OCI-LY7 (cell line): ENCODE measurements at regions of chr3 and their contacts with region 1.

Region 1: GRCh38 chr3:150763122-150763841 is at the start of gene SIAH2:
- DNase-seq: peak; percentile 92
- H3K4me3 ChIP-seq: peak within 1 kb of the TSS; percentile 78
- H3K27ac ChIP-seq: peak within 1 kb of the TSS; percentile 58
- H3K4me1 ChIP-seq: peaks cover 71% of the 10 kb centered on the region
- CTCF ChIP-seq: no peak
- total RNA-seq, gene SIAH2: 22.2 and 22.7 TPM in 2 replicates

Region 2: GRCh38 chr3:150546226-150547044 is 216.8 kb before region 1 on chr3 and contains the starts of genes EIF2A and SERP1:
- CTCF ChIA-PET with region 1: no interaction called
- POLR2A ChIA-PET with region 1: interaction called, 6 read pairs
- intact Hi-C with region 1: loop called (anchors 2 kb)
- DNase-seq: peak; percentile 99
- H3K4me3 ChIP-seq: peak within 1 kb of the TSS; percentile 98
- H3K27ac ChIP-seq: peak within 1 kb of the TSS; percentile 81
- H3K4me1 ChIP-seq: peaks cover 40% of the 10 kb centered on the region
- CTCF ChIP-seq: no peak
- total RNA-seq, gene EIF2A: 85.6 and 86.0 TPM in 2 replicates
- total RNA-seq, gene SERP1: 182 and 183 TPM in 2 replicates

Region 3: DNA sequence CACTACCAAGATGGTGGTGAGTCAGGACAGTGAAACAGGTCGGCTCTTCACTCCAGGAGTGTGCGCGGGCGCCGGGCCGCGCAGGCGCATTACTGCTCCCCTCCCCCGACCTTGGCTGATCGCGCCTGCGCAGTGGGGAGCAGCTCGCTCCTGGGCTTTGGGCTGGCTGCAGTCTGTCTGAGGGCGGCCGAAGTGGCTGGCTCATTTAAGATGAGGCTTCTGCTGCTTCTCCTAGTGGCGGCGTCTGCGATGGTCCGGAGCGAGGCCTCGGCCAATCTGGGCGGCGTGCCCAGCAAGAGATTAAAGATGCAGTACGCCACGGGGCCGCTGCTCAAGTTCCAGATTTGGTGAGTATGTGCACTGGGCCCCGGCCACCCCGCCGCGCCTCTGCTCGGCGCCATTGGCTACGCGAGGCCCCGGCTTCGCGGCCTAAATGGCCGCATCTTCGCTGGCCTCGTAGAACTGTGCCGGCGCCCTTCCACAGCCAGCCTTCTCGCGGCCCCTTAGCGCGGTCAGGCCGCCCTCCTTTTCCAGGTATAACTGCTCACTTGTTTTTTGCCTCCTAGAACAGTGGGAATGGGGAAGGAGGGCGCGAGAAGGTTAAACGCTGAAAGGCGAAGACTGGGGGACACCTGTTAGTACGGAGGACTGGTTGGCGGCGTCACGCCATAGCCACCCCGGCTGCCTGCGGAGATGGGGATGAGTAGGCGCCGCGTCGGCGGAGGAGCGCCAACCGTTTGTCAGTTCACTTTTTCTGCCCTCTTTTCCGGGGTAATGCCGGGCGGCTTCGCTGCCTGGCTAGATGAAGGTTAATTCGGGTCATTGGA is 159.9 kb before region 1 on chr3 and contains the start of gene SELENOT:
- CTCF ChIA-PET with region 1: interaction called, 4 read pairs
- POLR2A ChIA-PET with region 1: interaction called, 8 read pairs
- intact Hi-C with region 1: loop called (anchors 2 kb)
- DNase-seq: peak; percentile 95
- H3K4me3 ChIP-seq: peak within 1 kb of the TSS; percentile 88
- H3K27ac ChIP-seq: peak within 1 kb of the TSS; percentile 93
- H3K4me1 ChIP-seq: peaks cover 54% of the 10 kb centered on the region
- CTCF ChIP-seq: 0 out of 2 replicates have a peak, but pooled peaks have one; percentile 29
- total RNA-seq, gene SELENOT: 36.8 and 60.7 TPM in 2 replicates

Region 4: GRCh38 chr3:150737874-150738713 is 25.2 kb before region 1 on chr3:
- CTCF ChIA-PET with region 1: no interaction called
- POLR2A ChIA-PET with region 1: interaction called, 5 read pairs
- intact Hi-C with region 1: loop called (anchors 2 kb)
- DNase-seq: no peak
- H3K4me3 ChIP-seq: no peak overlapping the region
- H3K27ac ChIP-seq: no peak overlapping the region
- H3K4me1 ChIP-seq: peaks cover 23% of the 10 kb centered on the region
- CTCF ChIP-seq: no peak

Region 5: DNA sequence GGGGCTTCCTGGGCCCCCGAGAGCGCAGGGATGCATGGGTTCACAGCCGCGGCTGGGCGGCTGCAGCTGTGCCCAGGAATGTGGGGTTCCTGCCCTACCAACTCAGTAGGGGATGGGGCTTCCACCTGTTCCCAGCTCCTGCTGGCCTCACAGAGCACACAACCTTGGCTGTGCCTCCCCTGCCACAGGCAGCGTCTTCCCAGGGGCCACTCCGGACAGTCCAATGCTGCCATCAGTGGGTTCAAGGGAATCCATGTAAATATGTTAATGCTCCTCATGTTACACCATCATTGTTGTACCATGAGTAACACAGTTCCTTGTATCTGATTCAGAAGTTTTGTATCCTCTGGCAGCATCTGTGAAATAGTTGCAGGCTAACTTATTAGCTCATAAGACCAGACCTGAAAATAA is 11.8 kb after region 1 on chr3:
- CTCF ChIA-PET with region 1: no interaction called
- POLR2A ChIA-PET with region 1: interaction called, 23 read pairs
- intact Hi-C with region 1: no loop called
- DNase-seq: no peak
- H3K4me3 ChIP-seq: no peak overlapping the region
- H3K27ac ChIP-seq: no peak overlapping the region
- H3K4me1 ChIP-seq: peaks cover 7% of the 10 kb centered on the region
- CTCF ChIP-seq: no peak

Region 6: GRCh38 chr3:150861851-150862250 is 98.6 kb after region 1 on chr3:
- CTCF ChIA-PET with region 1: no interaction called
- POLR2A ChIA-PET with region 1: no interaction called
- intact Hi-C with region 1: no loop called
- DNase-seq: no peak
- H3K4me3 ChIP-seq: no peak overlapping the region
- H3K27ac ChIP-seq: no peak overlapping the region
- H3K4me1 ChIP-seq: no peaks in the 10 kb centered on the region
- CTCF ChIP-seq: no peak